Transverse colon (tissue), 4 donors: ENCODE measurements at regions of chr20 and their contacts with region 1.

Region 1: DNA sequence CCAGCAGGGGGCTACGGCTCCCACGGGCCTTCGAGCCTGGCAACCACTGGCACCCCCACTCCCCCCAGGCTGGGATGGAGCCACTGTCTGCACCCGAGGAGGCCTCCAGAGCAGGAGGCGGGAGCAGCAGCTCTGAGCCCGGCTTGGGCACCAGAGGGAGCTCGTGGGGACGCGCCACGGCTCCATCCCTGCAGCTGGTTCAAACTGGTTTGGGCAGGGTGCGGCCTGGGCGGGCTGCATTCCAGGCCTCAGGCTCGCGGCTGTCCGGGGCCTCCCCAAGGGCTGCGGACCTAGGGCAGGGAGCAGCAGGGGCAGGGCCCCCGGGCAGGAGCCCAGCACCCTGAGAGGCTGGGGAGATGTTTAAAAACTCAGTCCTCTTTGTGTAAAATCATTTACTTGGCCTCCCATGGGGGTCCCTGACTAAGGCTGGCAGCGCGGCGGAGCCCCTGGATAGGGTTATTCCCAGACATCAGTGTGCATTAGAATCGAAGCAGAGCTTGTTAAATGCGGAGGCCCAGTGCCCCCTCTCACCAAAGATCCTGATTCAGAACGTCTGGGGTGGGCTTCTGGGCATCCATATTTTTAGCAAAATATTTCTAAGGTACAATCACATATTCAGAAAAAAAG is 4.1 kb upstream of the BCAS4 start:
- DNase-seq: peak; percentile 94
- H3K4me3 ChIP-seq: peak overlapping the region in 1 of 4 donors; percentile 3
- H3K27ac ChIP-seq: peak overlapping the region; percentile 75 to 84 (median 81)
- H3K4me1 ChIP-seq: peaks cover 16 to 36% (median 27%) of the 10 kb centered on the region in 4 donors
- H3K27me3 ChIP-seq: no peaks in the 10 kb centered on the region
- CTCF ChIP-seq: peak; percentile 62 to 85 (median 71)
- EP300 ChIP-seq: peak; percentile 58
- POLR2A ChIP-seq: peak; percentile 41

Region 2: GRCh38 chr20:50200482-50201104 is 590.2 kb before region 1 on chr20:
- in situ Hi-C with region 1: no loop called
- intact Hi-C with region 1: no loop called
- DNase-seq: no peak
- H3K4me3 ChIP-seq: no peak overlapping the region
- H3K27ac ChIP-seq: no peak overlapping the region
- H3K4me1 ChIP-seq: no peaks in the 10 kb centered on the region
- H3K27me3 ChIP-seq: no peaks in the 10 kb centered on the region
- CTCF ChIP-seq: no peak
- EP300 ChIP-seq: no peak
- POLR2A ChIP-seq: no peak

Region 3: GRCh38 chr20:50645253-50646118 is 145.3 kb before region 1 on chr20:
- in situ Hi-C with region 1: no loop called
- intact Hi-C with region 1: no loop called
- DNase-seq: peak; percentile 71
- H3K4me3 ChIP-seq: no peak overlapping the region
- H3K27ac ChIP-seq: peak overlapping the region; percentile 77 to 87 (median 80)
- H3K4me1 ChIP-seq: peaks cover 4 to 13% (median 8%) of the 10 kb centered on the region in 4 donors
- H3K27me3 ChIP-seq: no peaks in the 10 kb centered on the region
- CTCF ChIP-seq: no peak
- EP300 ChIP-seq: no peak
- POLR2A ChIP-seq: no peak

Region 4: GRCh38 chr20:50929299-50930138 is 138.8 kb after region 1 on chr20:
- in situ Hi-C with region 1: loop called in 3 of 4 experiments (anchors 5 to 10 kb)
- intact Hi-C with region 1: loop called (anchors 2 kb)
- DNase-seq: peak; percentile 94
- H3K4me3 ChIP-seq: peak overlapping the region; percentile 64 to 87 (median 81)
- H3K27ac ChIP-seq: peak overlapping the region; percentile 86 to 98 (median 98)
- H3K4me1 ChIP-seq: peaks cover 26 to 61% (median 30%) of the 10 kb centered on the region in 4 donors
- H3K27me3 ChIP-seq: no peaks in the 10 kb centered on the region
- CTCF ChIP-seq: peak; percentile 82 to 98 (median 88)
- EP300 ChIP-seq: no peak
- POLR2A ChIP-seq: no peak